ENCODE measurements at regions of chr17 and their contacts with region 1.

Region 1: GRCh38 chr17:65100316-65101140 is 36.6 kb upstream of the RGS9 start:
- DNase-seq: peak; percentile 21 to 92
- H3K4me3 ChIP-seq: peak overlapping the region; percentile 55 to 64
- H3K27ac ChIP-seq: peak overlapping the region; percentile 51 to 58
- H3K4me1 ChIP-seq: peaks cover 0 to 4% of the 10 kb centered on the region in 2 donors
- H3K27me3 ChIP-seq: no peaks in the 10 kb centered on the region
- CTCF ChIP-seq: peak; percentile 89 to 99 (median 95)

Region 2: DNA sequence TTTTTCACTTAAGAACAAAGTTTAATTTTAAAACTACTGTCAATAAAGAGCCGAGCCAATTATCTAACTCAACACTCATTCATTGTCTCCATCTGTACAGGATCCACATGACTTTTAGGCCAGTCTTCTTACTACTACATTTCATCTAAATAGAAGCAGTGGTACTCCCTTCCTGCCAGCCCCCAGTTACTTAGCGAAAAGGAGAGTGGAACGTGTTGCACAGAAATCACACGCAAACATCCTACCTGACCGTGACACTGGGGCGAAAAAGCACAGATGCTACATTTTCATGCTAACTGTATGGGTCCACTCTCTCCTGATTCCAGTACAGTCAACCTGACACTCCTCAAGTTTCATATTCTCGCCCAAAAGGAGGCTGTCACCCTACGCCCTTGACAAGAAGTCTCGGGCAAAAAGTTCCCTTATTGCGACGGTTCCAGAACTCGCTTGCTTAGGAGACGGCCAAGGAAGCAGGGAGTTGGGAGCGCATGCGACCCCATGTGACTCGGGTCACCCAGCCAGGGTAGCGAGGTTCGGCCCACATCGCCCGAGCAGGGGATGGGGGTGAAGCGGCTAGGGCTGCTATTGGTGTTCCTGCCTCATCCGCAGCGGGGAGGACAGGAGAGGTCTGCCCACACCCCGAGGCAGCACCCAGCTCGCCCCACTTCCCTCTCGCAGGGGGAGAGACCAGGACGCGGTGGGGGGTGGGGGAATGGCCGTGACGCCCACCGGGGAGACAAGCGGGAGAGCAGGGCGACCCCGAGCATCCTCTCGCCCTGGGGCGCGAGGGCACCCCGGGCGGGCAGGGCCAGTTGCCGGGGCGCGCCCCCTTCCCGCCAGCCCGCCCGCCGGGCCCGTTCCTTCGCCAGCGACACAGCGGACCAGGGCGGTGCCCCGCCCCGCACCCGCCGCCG is 44.9 kb before region 1 on chr17:
- intact Hi-C with region 1: loop called (anchors 1 kb)
- DNase-seq: peak; percentile 27 to 80
- H3K4me3 ChIP-seq: peak overlapping the region; percentile 87 to 92
- H3K27ac ChIP-seq: peak overlapping the region; percentile 97 to 98
- H3K4me1 ChIP-seq: peaks cover 0 to 30% of the 10 kb centered on the region in 2 donors
- H3K27me3 ChIP-seq: no peaks in the 10 kb centered on the region
- CTCF ChIP-seq: no peak

Region 3: DNA sequence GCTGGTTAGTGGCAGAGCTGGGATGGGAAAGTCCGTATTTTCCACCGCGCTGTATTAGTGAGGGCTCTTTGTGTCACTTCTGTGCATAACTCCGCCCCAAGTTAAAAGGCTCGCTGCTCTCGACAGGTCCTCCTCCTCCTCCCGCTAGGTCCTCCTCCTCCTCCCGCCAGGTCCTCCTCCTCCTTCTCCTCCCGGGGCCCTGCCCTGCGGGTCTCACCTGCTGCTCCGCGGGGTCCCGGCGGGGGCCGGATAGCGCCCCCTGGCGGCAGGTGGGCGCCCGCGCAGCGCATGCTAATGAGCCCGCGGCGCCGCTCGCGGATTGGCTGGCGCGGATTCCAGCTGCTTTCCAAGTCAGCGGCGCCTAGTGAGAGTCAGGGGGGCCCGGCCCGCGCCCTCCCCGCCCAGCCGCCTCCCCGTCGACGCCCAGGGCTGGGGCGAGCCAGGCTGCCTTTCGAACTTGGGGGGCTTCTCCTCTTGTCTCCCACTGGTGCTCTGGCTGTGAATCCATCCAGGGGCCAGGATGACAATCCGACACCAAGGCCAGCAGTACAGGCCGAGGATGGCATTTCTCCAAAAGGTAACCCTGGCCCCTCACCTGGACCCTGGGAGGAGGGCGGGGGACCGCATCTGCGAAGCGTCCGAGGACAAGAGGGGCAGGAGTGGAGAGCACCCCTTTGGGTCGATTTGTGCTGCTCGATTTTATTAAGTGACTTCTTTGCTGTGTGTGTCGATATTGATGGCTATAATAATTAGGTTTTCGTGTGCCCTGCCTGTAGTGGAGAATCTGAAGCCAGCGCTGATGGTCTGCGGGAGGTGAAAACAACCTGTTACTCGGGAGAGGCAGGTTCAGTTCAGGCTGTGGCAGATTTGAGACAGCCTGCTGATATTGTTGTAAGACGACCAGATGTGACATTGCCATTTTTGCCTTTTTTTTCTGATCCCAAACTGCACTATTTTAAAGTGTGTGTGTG is 36.8 kb after region 1 on chr17 and contains the start of gene RGS9:
- intact Hi-C with region 1: loop called (anchors 1 kb)
- DNase-seq: peak; percentile 48 to 92
- H3K4me3 ChIP-seq: peak within 1 kb of the TSS; percentile 56 to 65
- H3K27ac ChIP-seq: peak within 1 kb of the TSS in 1 of 2 donors; percentile 13
- H3K4me1 ChIP-seq: peaks cover 5 to 7% of the 10 kb centered on the region in 2 donors
- H3K27me3 ChIP-seq: no peaks in the 10 kb centered on the region
- CTCF ChIP-seq: peak; percentile 97 to 100 (median 98)
- total RNA-seq, gene RGS9: 0.21 TPM

Region 4: DNA sequence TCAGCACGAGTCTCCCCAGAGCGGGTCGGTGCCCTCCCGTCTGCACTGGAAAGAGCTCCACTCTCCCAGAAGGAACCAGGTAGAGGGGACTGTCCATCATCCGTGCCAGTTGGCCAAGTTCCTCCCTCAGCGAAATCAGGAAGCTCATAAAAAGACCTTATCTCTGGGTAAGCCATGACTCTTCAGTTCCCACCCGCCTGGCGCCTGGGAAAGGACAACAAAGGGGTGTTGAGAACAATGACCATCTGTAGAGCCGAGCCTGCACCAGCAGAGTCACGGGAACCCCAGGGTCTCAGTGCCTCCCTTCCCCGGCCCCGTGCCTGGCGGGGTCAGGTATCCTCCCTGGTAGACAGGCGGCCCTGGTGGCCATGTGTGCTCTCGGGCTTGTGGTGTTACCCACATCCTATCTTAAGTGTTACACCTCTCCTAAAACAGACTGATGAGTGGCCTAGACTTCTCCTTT is 270.2 kb after region 1 on chr17:
- intact Hi-C with region 1: no loop called
- DNase-seq: no peak
- H3K4me3 ChIP-seq: no peak overlapping the region
- H3K27ac ChIP-seq: no peak overlapping the region
- H3K4me1 ChIP-seq: no peaks in the 10 kb centered on the region
- H3K27me3 ChIP-seq: no peaks in the 10 kb centered on the region
- CTCF ChIP-seq: no peak

Measured in ascending aorta (tissue), 2 donors.